Stomach (tissue), 19 donors: ENCODE measurements at regions of chrX and their contacts with region 1.

Region 1: DNA sequence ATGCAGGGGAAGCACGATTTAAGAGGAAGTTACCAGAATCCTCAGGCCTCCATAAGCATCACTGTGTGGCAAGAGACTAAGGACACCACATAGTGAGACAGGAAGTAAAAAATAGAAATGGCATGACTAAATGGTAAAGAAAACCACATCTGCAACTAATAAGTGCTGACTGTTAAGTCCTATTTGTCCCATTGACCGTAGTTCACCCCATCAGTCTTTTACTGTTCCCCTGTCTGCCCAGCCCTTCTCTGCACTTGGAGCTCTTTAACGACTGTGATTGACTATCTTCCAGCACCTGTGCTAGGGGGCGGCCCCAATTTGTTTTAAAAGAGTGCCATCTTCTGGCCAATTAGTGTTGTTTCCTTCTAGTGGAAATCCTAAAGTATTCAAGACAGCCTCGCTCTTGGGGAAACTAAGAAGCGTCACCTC is 94.2 kb downstream of the MAOA start:
- DNase-seq: peak; percentile 49 to 78
- H3K4me3 ChIP-seq: no peak overlapping the region
- H3K27ac ChIP-seq: no peak overlapping the region
- H3K4me1 ChIP-seq: peaks cover 0 to 26% (median 6%) of the 10 kb centered on the region in 4 donors
- H3K27me3 ChIP-seq: peaks cover 0 to 3% (median 0%) of the 10 kb centered on the region in 3 donors
- CTCF ChIP-seq: peak in 4 of 7 experiments; percentile 18 to 67 (median 40)
- EP300 ChIP-seq: no peak
- POLR2A ChIP-seq: no peak

Region 2: DNA sequence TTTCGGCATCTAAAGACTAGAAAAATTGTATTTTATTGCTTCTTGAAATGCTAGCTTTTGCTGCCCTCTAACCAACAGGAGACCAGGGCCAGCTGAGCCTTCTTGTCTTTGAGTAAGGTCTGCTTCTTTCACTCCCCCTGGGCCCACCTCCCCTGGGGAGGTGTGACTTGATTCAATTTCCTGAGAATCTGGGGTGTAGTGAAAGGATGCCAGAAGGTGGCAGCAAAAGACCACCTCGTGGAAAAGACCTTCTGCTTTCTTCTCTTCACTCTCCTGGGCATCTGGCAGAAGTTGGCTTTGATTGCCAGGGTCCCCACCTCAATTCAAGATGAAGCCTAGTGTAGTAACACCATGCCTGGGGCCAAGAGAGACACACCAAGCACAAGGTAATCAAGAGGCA is 190.6 kb before region 1 on chrX:
- intact Hi-C with region 1: loop called (anchors 5 kb)
- DNase-seq: peak; percentile 40 to 77
- H3K4me3 ChIP-seq: no peak overlapping the region
- H3K27ac ChIP-seq: peak overlapping the region in 1 of 5 donors; percentile 31
- H3K4me1 ChIP-seq: peaks cover 0 to 4% (median 0%) of the 10 kb centered on the region in 4 donors
- H3K27me3 ChIP-seq: peaks cover 0 to 4% (median 0%) of the 10 kb centered on the region in 3 donors
- CTCF ChIP-seq: peak in 4 of 7 experiments; percentile 38 to 68 (median 46)
- EP300 ChIP-seq: no peak
- POLR2A ChIP-seq: no peak